Activated CD8-positive, alpha-beta T cell treated with anti-CD3 and anti-CD28 coated beads, Interleukin-2, amount 10 ng/mL, durations not matched to agents 7 days and 5 days (primary cell): ENCODE measurements at regions of chr2 and their contacts with region 1.

Region 1: GRCh38 chr2:20365249-20365817 is 14.7 kb upstream of the PUM2 start:
- DNase-seq: peak; percentile 76
- ATAC-seq: peak; percentile 93
- H3K4me3 Mint-ChIP-seq: peak overlapping the region; percentile 21
- H3K27ac Mint-ChIP-seq: peak overlapping the region; percentile 56
- H3K4me1 Mint-ChIP-seq: peaks cover 27% of the 10 kb centered on the region
- H3K27me3 Mint-ChIP-seq: peaks cover 9% of the 10 kb centered on the region

Region 2: GRCh38 chr2:20350753-20351554 is 14.4 kb before region 1 on chr2 and contains the start of gene PUM2:
- CTCF ChIA-PET with region 1: interaction called, 9 read pairs
- POLR2A ChIA-PET with region 1: interaction called, 16 read pairs
- DNase-seq: peak; percentile 95
- ATAC-seq: peak; percentile 86
- H3K4me3 Mint-ChIP-seq: peak within 1 kb of the TSS; percentile 78
- H3K27ac Mint-ChIP-seq: no peak within 1 kb of the TSS
- H3K4me1 Mint-ChIP-seq: peaks cover 29% of the 10 kb centered on the region
- H3K27me3 Mint-ChIP-seq: no peaks in the 10 kb centered on the region
- total RNA-seq, gene PUM2: 123 to 129 TPM